Ovary (tissue), 10 donors: ENCODE measurements at regions of chr6 and their contacts with region 1.

Region 1: GRCh38 chr6:89610149-89610642 is 28.4 kb downstream of the LYRM2 start:
- DNase-seq: peak; percentile 29 to 71 (median 68)
- H3K4me3 ChIP-seq: no peak overlapping the region
- H3K27ac ChIP-seq: no peak overlapping the region
- H3K4me1 ChIP-seq: no peaks in the 10 kb centered on the region
- H3K27me3 ChIP-seq: no peaks in the 10 kb centered on the region
- CTCF ChIP-seq: peak; percentile 28 to 49 (median 41)
- EP300 ChIP-seq: no peak
- POLR2A ChIP-seq: no peak

Region 2: GRCh38 chr6:89432875-89433251 is 177.3 kb before region 1 on chr6 and contains the start of gene ANKRD6:
- intact Hi-C with region 1: loop called (anchors 5 to 10 kb)
- DNase-seq: peak; percentile 68 to 89 (median 83)
- H3K4me3 ChIP-seq: peak within 1 kb of the TSS; percentile 72
- H3K27ac ChIP-seq: peak within 1 kb of the TSS; percentile 35 to 47
- H3K4me1 ChIP-seq: peaks cover 11% of the 10 kb centered on the region
- H3K27me3 ChIP-seq: no peaks in the 10 kb centered on the region
- CTCF ChIP-seq: peak; percentile 62 to 96 (median 96)
- EP300 ChIP-seq: no peak
- POLR2A ChIP-seq: no peak
- total RNA-seq, gene ANKRD6: 24.0 to 50.1 (median 28.5) TPM